ENCODE measurements at regions of chr10 and their contacts with region 1.

Region 1: DNA sequence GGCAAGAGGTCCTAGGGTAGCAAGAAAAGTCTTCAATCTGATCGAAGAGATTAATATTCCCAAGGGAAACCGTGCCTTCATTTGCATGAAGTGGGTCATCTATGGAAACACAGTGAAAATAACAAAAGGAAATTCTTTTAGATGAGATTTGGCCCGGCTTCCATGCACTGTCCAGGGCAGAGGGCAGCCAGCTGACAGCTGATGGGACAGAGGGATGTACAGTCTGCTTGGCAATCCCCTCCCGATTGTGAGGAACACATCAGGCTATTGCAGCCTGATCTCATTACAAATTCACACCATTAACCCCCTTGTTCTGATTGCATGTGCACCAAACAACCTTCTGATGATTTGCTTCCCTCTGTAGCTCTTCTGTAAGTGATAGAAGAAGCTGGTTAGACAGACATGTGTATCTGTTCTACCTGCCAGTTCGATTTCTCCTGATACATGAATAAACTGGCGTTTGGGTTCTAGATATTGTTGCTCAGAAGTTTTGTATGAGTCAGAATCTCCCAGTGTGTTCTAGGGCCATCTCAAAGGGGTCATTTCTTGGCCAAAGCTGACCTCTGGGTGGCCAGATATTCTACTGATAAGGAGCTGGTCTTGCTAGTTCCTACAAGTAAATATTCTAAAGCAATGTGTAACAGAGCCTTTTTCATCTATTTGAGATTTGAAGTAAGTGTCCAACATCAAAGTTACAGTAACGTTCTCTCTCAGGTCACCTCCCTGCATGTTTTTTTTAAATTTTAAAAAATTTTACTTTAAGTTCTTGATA is 105.2 kb downstream of the FRMD4A start:
- DNase-seq: no peak
- H3K4me3 Mint-ChIP-seq: no peak overlapping the region
- H3K27ac Mint-ChIP-seq: no peak overlapping the region
- H3K4me1 Mint-ChIP-seq: no peaks in the 10 kb centered on the region
- H3K27me3 Mint-ChIP-seq: peaks cover 66% of the 10 kb centered on the region
- CTCF ChIP-seq: no peak

Region 2: GRCh38 chr10:14240253-14241189 is 15.0 kb after region 1 on chr10:
- CTCF ChIA-PET with region 1: interaction called, 10 read pairs
- intact Hi-C with region 1: no loop called
- DNase-seq: no peak
- H3K4me3 Mint-ChIP-seq: no peak overlapping the region
- H3K27ac Mint-ChIP-seq: no peak overlapping the region
- H3K4me1 Mint-ChIP-seq: no peaks in the 10 kb centered on the region
- H3K27me3 Mint-ChIP-seq: peaks cover 58% of the 10 kb centered on the region
- CTCF ChIP-seq: no peak